ENCODE measurements at regions of chr12 and their contacts with region 1.

Region 1: DNA sequence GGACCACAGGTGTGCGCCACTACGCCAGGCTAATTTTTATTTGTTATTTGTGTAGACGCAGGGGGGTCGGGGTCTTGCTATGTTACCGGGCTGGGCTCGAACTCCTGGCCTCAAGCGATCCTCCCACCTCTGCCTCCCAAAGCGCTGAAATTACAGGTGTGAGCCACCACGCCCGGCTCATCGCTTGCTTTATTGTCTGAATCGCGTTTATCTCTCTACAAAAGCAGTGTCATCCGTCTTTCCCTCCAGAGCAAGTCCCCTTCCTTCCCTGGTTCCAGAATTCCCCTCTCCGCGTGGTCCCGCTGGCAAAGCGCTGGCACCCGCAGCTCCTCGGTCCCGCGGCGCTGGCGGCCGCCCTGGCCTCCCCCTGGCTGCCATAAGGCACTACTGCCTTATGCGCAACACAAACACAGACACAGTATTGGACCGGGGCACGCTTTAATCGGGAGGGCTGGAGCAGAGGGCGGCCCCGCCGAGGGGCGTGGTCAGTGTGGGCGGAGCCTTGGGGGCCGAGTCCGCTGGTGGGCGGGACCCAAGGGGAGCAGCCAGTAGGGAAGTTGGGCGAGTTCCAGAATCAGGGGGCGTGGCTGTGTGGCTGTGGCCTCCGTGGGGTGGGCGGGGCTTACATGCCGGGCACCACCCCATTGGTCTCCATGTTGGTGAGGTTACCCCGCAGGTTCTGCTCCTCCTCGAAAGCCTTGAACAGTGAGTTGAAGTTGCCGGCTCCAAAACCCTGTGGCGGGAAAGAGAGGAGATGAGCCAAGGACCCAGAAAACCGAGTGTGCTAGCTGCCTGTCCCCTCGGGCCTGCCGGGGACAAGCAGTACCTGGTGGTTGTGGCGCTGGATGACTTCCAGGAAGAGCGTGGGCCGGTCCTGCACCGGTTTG is 19.3 kb downstream of the HPD start:
- DNase-seq: peak; percentile 99
- ATAC-seq: peak; percentile 99
- H3K4me3 Mint-ChIP-seq: peak overlapping the region; percentile 97
- H3K27ac Mint-ChIP-seq: peak overlapping the region; percentile 88
- H3K4me1 Mint-ChIP-seq: peaks cover 15% of the 10 kb centered on the region
- H3K27me3 Mint-ChIP-seq: no peaks in the 10 kb centered on the region
- CTCF ChIP-seq: no peak

Region 2: GRCh38 chr12:121712461-121713256 is 126.7 kb before region 1 on chr12 and contains the start of gene TMEM120B:
- CTCF ChIA-PET with region 1: no interaction called
- POLR2A ChIA-PET with region 1: interaction called, 4 read pairs
- intact Hi-C with region 1: loop called (anchors 1 kb)
- DNase-seq: peak; percentile 86
- ATAC-seq: peak; percentile 94
- H3K4me3 Mint-ChIP-seq: peak within 1 kb of the TSS; percentile 97
- H3K27ac Mint-ChIP-seq: peak within 1 kb of the TSS; percentile 90
- H3K4me1 Mint-ChIP-seq: peaks cover 32% of the 10 kb centered on the region
- H3K27me3 Mint-ChIP-seq: no peaks in the 10 kb centered on the region
- CTCF ChIP-seq: no peak
- total RNA-seq, gene TMEM120B: 7.3 and 8.3 TPM in 2 replicates

Region 3: GRCh38 chr12:121802846-121803630 is 36.3 kb before region 1 on chr12:
- CTCF ChIA-PET with region 1: no interaction called
- POLR2A ChIA-PET with region 1: interaction called, 9 read pairs
- intact Hi-C with region 1: loop called (anchors 1 kb)
- DNase-seq: peak; percentile 91
- ATAC-seq: peak; percentile 40
- H3K4me3 Mint-ChIP-seq: peak overlapping the region; percentile 93
- H3K27ac Mint-ChIP-seq: peak overlapping the region; percentile 100
- H3K4me1 Mint-ChIP-seq: peaks cover 57% of the 10 kb centered on the region
- H3K27me3 Mint-ChIP-seq: no peaks in the 10 kb centered on the region
- CTCF ChIP-seq: no peak

Region 4: DNA sequence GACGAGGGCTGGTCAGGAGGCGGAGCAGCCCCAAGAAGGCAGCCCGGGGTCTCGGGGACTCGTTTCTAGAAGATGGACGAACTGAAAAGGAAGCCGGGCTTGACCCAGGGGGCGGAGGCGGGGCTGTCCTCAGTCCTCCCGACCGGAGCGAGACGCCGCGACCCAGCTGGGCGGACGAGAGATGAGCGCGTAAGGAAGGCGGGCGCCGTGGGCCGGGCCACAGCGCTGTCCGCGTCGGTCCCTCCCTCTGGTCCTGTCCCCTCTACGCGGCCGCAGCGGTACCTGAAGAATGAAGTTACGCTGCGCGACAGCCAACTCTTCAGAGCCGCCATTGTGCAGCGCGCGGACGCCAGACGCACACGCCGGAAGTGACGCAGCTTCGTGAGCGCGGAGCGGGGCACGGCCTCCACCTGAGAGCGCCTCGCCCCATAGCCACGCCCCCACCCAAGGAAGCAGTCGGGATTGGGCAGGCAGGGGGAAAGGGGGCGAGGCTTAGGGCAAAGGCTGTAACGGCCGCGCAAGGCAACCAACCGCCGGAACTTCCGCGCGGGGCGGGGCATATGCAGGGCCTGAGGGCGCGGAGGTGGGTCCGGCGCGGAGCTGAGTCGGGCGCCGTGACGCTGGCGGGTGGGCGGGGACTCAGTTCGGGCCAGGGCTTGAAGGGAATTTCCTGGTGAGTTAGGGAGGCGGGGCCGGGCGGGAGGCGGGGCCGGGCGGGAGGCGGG is 386.5 kb after region 1 on chr12 and contains the start of gene DIABLO:
- CTCF ChIA-PET with region 1: no interaction called
- POLR2A ChIA-PET with region 1: no interaction called
- intact Hi-C with region 1: loop called (anchors 10 kb)
- DNase-seq: peak; percentile 99
- ATAC-seq: peak; percentile 93
- H3K4me3 Mint-ChIP-seq: peak within 1 kb of the TSS; percentile 89
- H3K27ac Mint-ChIP-seq: peak within 1 kb of the TSS; percentile 89
- H3K4me1 Mint-ChIP-seq: peaks cover 26% of the 10 kb centered on the region
- H3K27me3 Mint-ChIP-seq: no peaks in the 10 kb centered on the region
- CTCF ChIP-seq: no peak
- total RNA-seq, gene DIABLO: 39.8 and 51.3 TPM in 2 replicates